ENCODE measurements at regions of chr17 and their contacts with region 1.

Region 1: DNA sequence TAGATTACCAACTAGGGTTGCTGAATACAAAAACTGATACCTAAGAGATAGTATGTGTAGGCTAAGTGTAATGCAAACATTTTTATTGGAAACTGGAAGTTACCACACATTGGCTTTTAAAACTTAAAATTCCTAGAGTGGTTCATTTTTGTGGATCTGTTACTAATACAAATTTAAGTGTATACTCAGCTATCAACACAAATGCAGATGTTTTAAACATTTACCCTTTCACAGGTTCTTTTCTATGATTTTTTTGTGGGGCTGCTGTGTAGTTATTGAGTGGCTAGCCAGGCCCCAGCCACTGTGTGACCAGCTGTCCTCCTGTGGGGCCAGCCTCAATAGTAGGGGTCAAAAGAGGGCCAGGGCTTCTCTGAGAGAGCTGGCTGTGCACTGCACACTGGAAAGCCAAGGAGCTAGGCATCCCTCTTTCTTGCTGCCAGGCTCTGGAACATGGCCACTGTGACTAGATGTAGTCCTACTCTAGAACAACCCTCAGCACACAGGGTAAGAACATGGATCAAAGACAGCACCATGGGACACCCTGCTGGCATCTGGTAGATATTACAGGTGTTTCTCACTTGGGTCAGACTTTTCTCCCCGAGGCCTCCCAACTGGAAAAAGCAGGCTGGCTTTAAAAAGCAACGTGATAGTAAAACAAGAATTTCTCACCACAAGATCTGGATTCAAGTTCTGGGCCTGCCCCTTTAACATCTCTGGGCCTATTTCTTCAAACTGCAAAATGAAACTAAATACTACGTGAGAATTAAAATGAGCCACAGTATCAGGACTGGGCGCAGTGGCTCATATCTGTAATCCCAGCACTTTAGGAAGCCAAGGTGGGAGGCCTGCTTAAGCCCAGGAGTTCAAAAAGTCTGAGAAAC is 7.3 kb upstream of the VEZF1 start:
- DNase-seq: peak; percentile 22
- ATAC-seq: peak; percentile 94
- H3K4me3 Mint-ChIP-seq: no peak overlapping the region
- H3K27ac Mint-ChIP-seq: peak overlapping the region; percentile 46
- H3K4me1 Mint-ChIP-seq: peaks cover 38% of the 10 kb centered on the region
- H3K27me3 Mint-ChIP-seq: no peaks in the 10 kb centered on the region
- CTCF ChIP-seq: peak; percentile 25

Region 2: GRCh38 chr17:57849874-57850754 is 145.2 kb before region 1 on chr17 and contains the start of gene MRPS23:
- CTCF ChIA-PET with region 1: interaction called, 242 read pairs
- POLR2A ChIA-PET with region 1: interaction called, 9 read pairs
- intact Hi-C with region 1: loop called (anchors 2 kb)
- DNase-seq: peak; percentile 87
- ATAC-seq: peak; percentile 95
- H3K4me3 Mint-ChIP-seq: peak within 1 kb of the TSS; percentile 93
- H3K27ac Mint-ChIP-seq: peak within 1 kb of the TSS; percentile 96
- H3K4me1 Mint-ChIP-seq: peaks cover 38% of the 10 kb centered on the region
- H3K27me3 Mint-ChIP-seq: no peaks in the 10 kb centered on the region
- CTCF ChIP-seq: no peak
- total RNA-seq, gene MRPS23: 37.9 and 47.4 TPM in 2 replicates

Region 3: GRCh38 chr17:57868007-57868909 is 127.1 kb before region 1 on chr17:
- CTCF ChIA-PET with region 1: interaction called, 242 read pairs
- POLR2A ChIA-PET with region 1: interaction called, 3 read pairs
- intact Hi-C with region 1: no loop called
- DNase-seq: peak; percentile 53
- ATAC-seq: peak; percentile 94
- H3K4me3 Mint-ChIP-seq: peak overlapping the region; percentile 24
- H3K27ac Mint-ChIP-seq: peak overlapping the region; percentile 65
- H3K4me1 Mint-ChIP-seq: peaks cover 29% of the 10 kb centered on the region
- H3K27me3 Mint-ChIP-seq: peaks cover 20% of the 10 kb centered on the region
- CTCF ChIP-seq: no peak

Region 4: GRCh38 chr17:57916925-57917858 is 78.1 kb before region 1 on chr17:
- CTCF ChIA-PET with region 1: interaction called, 13 read pairs
- POLR2A ChIA-PET with region 1: no interaction called
- intact Hi-C with region 1: loop called (anchors 1 kb)
- DNase-seq: no peak
- ATAC-seq: peak; percentile 72
- H3K4me3 Mint-ChIP-seq: no peak overlapping the region
- H3K27ac Mint-ChIP-seq: no peak overlapping the region
- H3K4me1 Mint-ChIP-seq: no peaks in the 10 kb centered on the region
- H3K27me3 Mint-ChIP-seq: peaks cover 26% of the 10 kb centered on the region
- CTCF ChIP-seq: no peak

Region 5: GRCh38 chr17:58112970-58113631 is 117.8 kb after region 1 on chr17:
- CTCF ChIA-PET with region 1: interaction called, 9 read pairs
- POLR2A ChIA-PET with region 1: interaction called, 3 read pairs
- intact Hi-C with region 1: loop called (anchors 2 kb)
- DNase-seq: peak; percentile 68
- ATAC-seq: peak; percentile 95
- H3K4me3 Mint-ChIP-seq: no peak overlapping the region
- H3K27ac Mint-ChIP-seq: no peak overlapping the region
- H3K4me1 Mint-ChIP-seq: no peaks in the 10 kb centered on the region
- H3K27me3 Mint-ChIP-seq: peaks cover 25% of the 10 kb centered on the region
- CTCF ChIP-seq: peak; percentile 53